HCT116 (cell line): ENCODE measurements at regions of chr20 and their contacts with region 1.

Region 1: GRCh38 chr20:3316136-3316535 is 77.1 kb upstream of the SLC4A11 start:
- DNase-seq: no peak
- ATAC-seq: no peak
- H3K4me3 ChIP-seq: no peak overlapping the region
- H3K27ac ChIP-seq: no peak overlapping the region
- H3K4me1 ChIP-seq: no peaks in the 10 kb centered on the region
- H3K27me3 ChIP-seq: no peaks in the 10 kb centered on the region
- CTCF ChIP-seq: no peak
- POLR2A ChIP-seq: no peak
- RAD21 ChIP-seq: no peak

Region 2: GRCh38 chr20:3045816-3046676 is 270.1 kb before region 1 on chr20 and contains the start of gene MRPS26:
- CTCF ChIA-PET with region 1: no interaction called
- POLR2A ChIA-PET with region 1: no interaction called
- RAD21 ChIA-PET with region 1: interaction called in 1 of 2 experiments, 4 read pairs
- intact Hi-C with region 1: loop called (anchors 1 kb)
- DNase-seq: peak; percentile 60
- ATAC-seq: peak; percentile 94
- H3K4me3 ChIP-seq: peak within 1 kb of the TSS; percentile 73 to 97
- H3K27ac ChIP-seq: peak within 1 kb of the TSS; percentile 87
- H3K4me1 ChIP-seq: peaks cover 4 to 27% of the 10 kb centered on the region in 2 experiments; a peak in 3 of 4 replicates
- H3K27me3 ChIP-seq: no peaks in the 10 kb centered on the region
- CTCF ChIP-seq: no peak
- POLR2A ChIP-seq: peak; percentile 87
- RAD21 ChIP-seq: no peak
- total RNA-seq, gene MRPS26: 84.3 TPM

Region 3: DNA sequence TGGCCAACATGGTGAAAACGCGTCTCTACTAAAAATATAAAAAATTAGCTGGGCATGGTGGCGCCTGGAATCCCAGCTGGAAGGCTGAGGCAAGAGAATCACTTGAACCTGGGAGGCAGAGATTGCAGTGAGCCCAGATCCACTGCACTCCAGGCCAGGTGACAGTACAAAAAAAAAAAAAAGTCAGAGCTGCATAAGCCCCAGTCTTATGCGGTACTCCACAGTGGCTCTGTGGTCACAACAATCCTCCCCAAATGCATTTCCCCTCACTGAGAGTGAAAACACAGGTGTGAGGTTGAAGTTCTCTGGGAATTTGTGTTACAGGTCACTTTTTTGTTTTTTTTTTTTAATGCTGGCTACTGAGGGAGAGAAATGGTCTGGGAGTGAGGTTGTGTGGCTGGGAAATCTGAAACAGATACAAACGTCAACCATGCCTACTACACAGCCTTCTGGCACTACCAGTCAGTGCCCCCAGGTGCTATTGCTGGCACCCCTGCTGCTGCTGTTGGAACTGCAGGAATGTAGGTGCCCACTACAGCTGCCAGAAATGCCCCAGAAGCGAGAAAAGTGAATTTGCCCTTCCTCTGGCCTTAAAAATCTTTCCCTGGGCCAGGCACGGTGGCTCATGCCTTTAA is 264.6 kb before region 1 on chr20:
- CTCF ChIA-PET with region 1: interaction called, 9 read pairs
- POLR2A ChIA-PET with region 1: no interaction called
- RAD21 ChIA-PET with region 1: interaction called in 1 of 2 experiments, 4 read pairs
- intact Hi-C with region 1: loop called (anchors 1 kb)
- DNase-seq: no peak
- ATAC-seq: peak; percentile 46; the same call in 1 of the 2 replicates
- H3K4me3 ChIP-seq: no peak overlapping the region
- H3K27ac ChIP-seq: no peak overlapping the region
- H3K4me1 ChIP-seq: peaks cover 0 to 18% of the 10 kb centered on the region in 2 experiments; a peak in 2 of 4 replicates
- H3K27me3 ChIP-seq: no peaks in the 10 kb centered on the region
- CTCF ChIP-seq: peak in 2 of 3 experiments; percentile 15 to 27; a peak in 1 of 6 replicates
- POLR2A ChIP-seq: no peak
- RAD21 ChIP-seq: no peak

Region 4: GRCh38 chr20:3115190-3116107 is 200.7 kb before region 1 on chr20:
- CTCF ChIA-PET with region 1: no interaction called
- POLR2A ChIA-PET with region 1: no interaction called
- RAD21 ChIA-PET with region 1: no interaction called
- intact Hi-C with region 1: loop called (anchors 1 kb)
- DNase-seq: peak; percentile 22
- ATAC-seq: peak; percentile 65; the same call in 1 of the 2 replicates
- H3K4me3 ChIP-seq: no peak overlapping the region
- H3K27ac ChIP-seq: no peak overlapping the region
- H3K4me1 ChIP-seq: peaks cover 0 to 8% of the 10 kb centered on the region in 2 experiments; a peak in 1 of 4 replicates
- H3K27me3 ChIP-seq: no peaks in the 10 kb centered on the region
- CTCF ChIP-seq: peak; percentile 61 to 80 (median 66); a peak in 5 of 6 replicates
- POLR2A ChIP-seq: no peak
- RAD21 ChIP-seq: peak; percentile 51

Region 5: DNA sequence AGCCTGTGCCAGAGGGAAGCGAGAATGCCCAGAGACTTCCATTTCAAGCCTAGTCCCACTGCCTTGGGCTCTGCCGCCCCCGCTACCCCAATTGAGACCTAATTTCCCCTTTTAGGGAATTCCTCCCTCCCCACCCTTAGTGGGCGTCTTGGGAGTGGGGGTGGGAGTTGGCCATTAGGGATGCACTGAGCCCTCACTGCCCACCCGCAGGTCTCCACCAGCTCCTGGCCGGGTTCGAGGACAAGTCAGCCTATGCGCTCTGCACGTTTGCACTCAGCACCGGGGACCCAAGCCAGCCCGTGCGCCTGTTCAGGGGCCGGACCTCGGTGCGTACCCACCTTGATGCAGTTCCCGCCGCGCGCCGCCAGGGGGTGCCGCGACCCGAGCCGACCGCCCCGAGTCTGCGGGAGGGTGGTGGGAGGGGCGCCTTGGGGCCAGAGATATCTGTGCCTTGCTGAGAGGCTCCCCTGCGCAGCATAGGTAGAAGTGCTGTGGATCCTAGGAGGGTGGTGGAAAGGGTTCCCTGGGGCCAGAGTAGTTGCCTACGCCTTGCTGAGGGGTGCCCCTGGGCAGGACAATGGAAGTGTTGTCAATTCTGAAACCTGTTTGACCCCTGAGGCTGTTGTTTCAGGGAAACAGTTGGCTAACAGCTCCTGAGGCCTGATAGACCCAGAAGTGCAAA is 97.7 kb before region 1 on chr20:
- CTCF ChIA-PET with region 1: interaction called, 9 read pairs
- POLR2A ChIA-PET with region 1: no interaction called
- RAD21 ChIA-PET with region 1: no interaction called
- intact Hi-C with region 1: loop called (anchors 1 kb)
- DNase-seq: no peak
- ATAC-seq: peak; percentile 96
- H3K4me3 ChIP-seq: no peak overlapping the region
- H3K27ac ChIP-seq: peak overlapping the region; percentile 29; the same call in 1 of the 2 replicates
- H3K4me1 ChIP-seq: peaks cover 6 to 9% of the 10 kb centered on the region in 2 experiments; a peak in 3 of 4 replicates
- H3K27me3 ChIP-seq: no peaks in the 10 kb centered on the region
- CTCF ChIP-seq: peak; percentile 75 to 95 (median 89)
- POLR2A ChIP-seq: no peak
- RAD21 ChIP-seq: peak; percentile 79

Region 6: GRCh38 chr20:3452690-3453089 is 136.6 kb after region 1 on chr20:
- CTCF ChIA-PET with region 1: no interaction called
- POLR2A ChIA-PET with region 1: no interaction called
- RAD21 ChIA-PET with region 1: no interaction called
- intact Hi-C with region 1: no loop called
- DNase-seq: no peak
- ATAC-seq: no peak
- H3K4me3 ChIP-seq: no peak overlapping the region
- H3K27ac ChIP-seq: no peak overlapping the region
- H3K4me1 ChIP-seq: no peaks in the 10 kb centered on the region
- H3K27me3 ChIP-seq: no peaks in the 10 kb centered on the region; the same call in 1 of the 2 replicates
- CTCF ChIP-seq: no peak
- POLR2A ChIP-seq: no peak
- RAD21 ChIP-seq: no peak